CD8-positive, alpha-beta T cell (primary cell): ENCODE measurements at regions of chr7 and their contacts with region 1.

Region 1: DNA sequence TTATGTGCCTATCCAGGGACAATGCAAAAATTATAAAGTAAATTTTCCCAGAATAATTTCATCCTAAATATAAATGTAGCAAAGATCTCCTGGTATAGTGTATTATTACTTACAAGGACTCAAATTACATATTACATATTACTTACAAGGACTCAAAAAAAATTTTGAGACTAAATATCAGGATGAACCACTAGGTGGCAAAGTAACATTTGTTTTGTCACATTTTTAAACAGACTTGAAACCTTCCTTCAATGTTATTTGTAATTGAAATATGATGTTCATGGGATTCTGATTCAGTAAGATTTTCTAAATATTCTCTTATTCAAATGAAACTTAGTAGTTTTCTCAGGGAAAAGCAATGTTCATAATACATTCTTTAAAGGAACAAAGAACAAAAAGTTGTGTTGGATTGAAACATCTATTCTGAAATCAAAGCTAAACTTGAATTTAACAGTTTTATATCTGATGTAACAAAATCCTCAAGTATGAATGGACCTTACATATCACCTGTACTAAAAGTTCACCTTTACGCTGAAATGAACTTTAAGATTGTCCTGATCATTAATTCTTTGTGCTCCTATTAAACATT is 74.3 kb upstream of the GNAI1 start:
- DNase-seq: peak in 2 of 9 experiments; percentile 11 to 44
- ATAC-seq: no peak
- H3K4me3 ChIP-seq: no peak overlapping the region
- H3K4me3 Mint-ChIP-seq: no peak overlapping the region
- H3K27ac ChIP-seq: no peak overlapping the region
- H3K27ac Mint-ChIP-seq: no peak overlapping the region
- H3K4me1 ChIP-seq: no peaks in the 10 kb centered on the region
- H3K4me1 Mint-ChIP-seq: no peaks in the 10 kb centered on the region
- H3K27me3 ChIP-seq: no peaks in the 10 kb centered on the region
- H3K27me3 Mint-ChIP-seq: no peaks in the 10 kb centered on the region
- CTCF ChIP-seq: peak; percentile 34

Region 2: GRCh38 chr7:80134536-80135320 is 74.4 kb after region 1 on chr7 and contains the start of gene GNAI1:
- CTCF ChIA-PET with region 1: no interaction called
- POLR2A ChIA-PET with region 1: no interaction called
- intact Hi-C with region 1: no loop called
- DNase-seq: peak in 6 of 9 experiments; percentile 13 to 51 (median 28)
- ATAC-seq: peak; percentile 41
- H3K4me3 ChIP-seq: peak within 1 kb of the TSS; percentile 53 to 60
- H3K4me3 Mint-ChIP-seq: peak within 1 kb of the TSS; percentile 86
- H3K27ac ChIP-seq: peak within 1 kb of the TSS in 1 of 2 experiments; percentile 17
- H3K27ac Mint-ChIP-seq: peak within 1 kb of the TSS; percentile 10
- H3K4me1 ChIP-seq: peaks cover 4% of the 10 kb centered on the region
- H3K4me1 Mint-ChIP-seq: peaks cover 19% of the 10 kb centered on the region
- H3K27me3 ChIP-seq: no peaks in the 10 kb centered on the region
- H3K27me3 Mint-ChIP-seq: peaks cover 20% of the 10 kb centered on the region
- CTCF ChIP-seq: peak; percentile 17
- total RNA-seq, gene GNAI1: 0.30 to 0.36 TPM

Region 3: GRCh38 chr7:80186721-80187120 is 126.4 kb after region 1 on chr7:
- CTCF ChIA-PET with region 1: no interaction called
- POLR2A ChIA-PET with region 1: no interaction called
- intact Hi-C with region 1: no loop called
- DNase-seq: no peak
- ATAC-seq: no peak
- H3K4me3 ChIP-seq: no peak overlapping the region
- H3K4me3 Mint-ChIP-seq: no peak overlapping the region
- H3K27ac ChIP-seq: no peak overlapping the region
- H3K27ac Mint-ChIP-seq: no peak overlapping the region
- H3K4me1 ChIP-seq: no peaks in the 10 kb centered on the region
- H3K4me1 Mint-ChIP-seq: peaks cover 2% of the 10 kb centered on the region
- H3K27me3 ChIP-seq: no peaks in the 10 kb centered on the region
- H3K27me3 Mint-ChIP-seq: no peaks in the 10 kb centered on the region
- CTCF ChIP-seq: no peak

Region 4: DNA sequence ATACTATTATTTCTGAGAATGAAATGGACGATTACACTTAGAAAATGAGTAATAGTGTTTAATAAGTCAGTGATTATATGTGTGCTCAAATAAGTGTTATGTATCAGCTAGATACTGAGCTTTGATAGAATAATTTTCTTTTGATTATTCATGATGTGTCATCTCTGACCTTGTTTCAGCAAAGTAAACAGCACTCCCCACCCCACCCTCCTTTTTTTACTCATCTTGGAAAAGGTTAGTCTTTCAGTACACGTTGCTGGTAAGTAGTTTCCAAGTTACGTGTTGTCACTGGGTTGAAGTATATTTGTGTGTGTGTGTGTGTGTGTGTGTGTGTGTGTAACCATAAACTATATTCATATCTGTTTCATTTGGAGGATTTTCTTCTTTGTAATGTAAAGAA is 158.4 kb after region 1 on chr7:
- CTCF ChIA-PET with region 1: no interaction called
- POLR2A ChIA-PET with region 1: no interaction called
- intact Hi-C with region 1: no loop called
- DNase-seq: no peak
- ATAC-seq: no peak
- H3K4me3 ChIP-seq: no peak overlapping the region
- H3K4me3 Mint-ChIP-seq: no peak overlapping the region
- H3K27ac ChIP-seq: no peak overlapping the region
- H3K27ac Mint-ChIP-seq: no peak overlapping the region
- H3K4me1 ChIP-seq: no peaks in the 10 kb centered on the region
- H3K4me1 Mint-ChIP-seq: peaks cover 8% of the 10 kb centered on the region
- H3K27me3 ChIP-seq: no peaks in the 10 kb centered on the region
- H3K27me3 Mint-ChIP-seq: peaks cover 3% of the 10 kb centered on the region
- CTCF ChIP-seq: no peak

Region 5: GRCh38 chr7:80288175-80289122 is 228.1 kb after region 1 on chr7:
- CTCF ChIA-PET with region 1: interaction called, 6 read pairs
- POLR2A ChIA-PET with region 1: no interaction called
- intact Hi-C with region 1: loop called in 1 of 2 experiments (anchors 10 kb)
- DNase-seq: peak in 2 of 9 experiments; percentile 2 to 14
- ATAC-seq: no peak
- H3K4me3 ChIP-seq: no peak overlapping the region
- H3K4me3 Mint-ChIP-seq: no peak overlapping the region
- H3K27ac ChIP-seq: no peak overlapping the region
- H3K27ac Mint-ChIP-seq: no peak overlapping the region
- H3K4me1 ChIP-seq: no peaks in the 10 kb centered on the region
- H3K4me1 Mint-ChIP-seq: no peaks in the 10 kb centered on the region
- H3K27me3 ChIP-seq: no peaks in the 10 kb centered on the region
- H3K27me3 Mint-ChIP-seq: no peaks in the 10 kb centered on the region
- CTCF ChIP-seq: no peak

Region 6: GRCh38 chr7:80392229-80393169 is 332.2 kb after region 1 on chr7:
- CTCF ChIA-PET with region 1: interaction called, 6 read pairs
- POLR2A ChIA-PET with region 1: no interaction called
- intact Hi-C with region 1: loop called (anchors 1 to 2 kb)
- DNase-seq: peak in 1 of 9 experiments; percentile 34
- ATAC-seq: no peak
- H3K4me3 ChIP-seq: no peak overlapping the region
- H3K4me3 Mint-ChIP-seq: no peak overlapping the region
- H3K27ac ChIP-seq: no peak overlapping the region
- H3K27ac Mint-ChIP-seq: no peak overlapping the region
- H3K4me1 ChIP-seq: no peaks in the 10 kb centered on the region
- H3K4me1 Mint-ChIP-seq: no peaks in the 10 kb centered on the region
- H3K27me3 ChIP-seq: no peaks in the 10 kb centered on the region
- H3K27me3 Mint-ChIP-seq: no peaks in the 10 kb centered on the region
- CTCF ChIP-seq: peak; percentile 40

Region 7: GRCh38 chr7:80453699-80454340 is 393.5 kb after region 1 on chr7:
- CTCF ChIA-PET with region 1: interaction called, 4 read pairs
- POLR2A ChIA-PET with region 1: no interaction called
- intact Hi-C with region 1: loop called (anchors 1 to 2 kb)
- DNase-seq: peak in 1 of 9 experiments; percentile 21
- ATAC-seq: no peak
- H3K4me3 ChIP-seq: no peak overlapping the region
- H3K4me3 Mint-ChIP-seq: no peak overlapping the region
- H3K27ac ChIP-seq: no peak overlapping the region
- H3K27ac Mint-ChIP-seq: no peak overlapping the region
- H3K4me1 ChIP-seq: no peaks in the 10 kb centered on the region
- H3K4me1 Mint-ChIP-seq: no peaks in the 10 kb centered on the region
- H3K27me3 ChIP-seq: no peaks in the 10 kb centered on the region
- H3K27me3 Mint-ChIP-seq: no peaks in the 10 kb centered on the region
- CTCF ChIP-seq: no peak

Region 8: GRCh38 chr7:80659120-80660055 is 599.1 kb after region 1 on chr7:
- CTCF ChIA-PET with region 1: interaction called, 6 read pairs
- POLR2A ChIA-PET with region 1: no interaction called
- intact Hi-C with region 1: loop called in 1 of 2 experiments (anchors 2 kb)
- DNase-seq: peak in 1 of 9 experiments; percentile 34
- ATAC-seq: peak; percentile 52
- H3K4me3 ChIP-seq: no peak overlapping the region
- H3K4me3 Mint-ChIP-seq: no peak overlapping the region
- H3K27ac ChIP-seq: no peak overlapping the region
- H3K27ac Mint-ChIP-seq: no peak overlapping the region
- H3K4me1 ChIP-seq: no peaks in the 10 kb centered on the region
- H3K4me1 Mint-ChIP-seq: peaks cover 2% of the 10 kb centered on the region
- H3K27me3 ChIP-seq: no peaks in the 10 kb centered on the region
- H3K27me3 Mint-ChIP-seq: no peaks in the 10 kb centered on the region
- CTCF ChIP-seq: peak; percentile 69